ENCODE measurements at regions of chr10 and their contacts with region 1.

Region 1: GRCh38 chr10:17257466-17258321 is 29.7 kb downstream of the VIM start:
- DNase-seq: peak; percentile 18
- ATAC-seq: peak; percentile 81 to 90
- H3K4me3 ChIP-seq: peak overlapping the region in 1 of 4 donors; percentile 2
- H3K27ac ChIP-seq: no peak overlapping the region
- H3K4me1 ChIP-seq: peaks cover 0 to 4% of the 10 kb centered on the region in 2 donors
- H3K27me3 ChIP-seq: no peaks in the 10 kb centered on the region
- CTCF ChIP-seq: peak; percentile 63 to 85 (median 72)
- POLR2A ChIP-seq: no peak

Region 2: GRCh38 chr10:15901889-15902288 is 1355.8 kb before region 1 on chr10:
- in situ Hi-C with region 1: loop called in 1 of 4 experiments (anchors 25 kb)
- intact Hi-C with region 1: no loop called
- DNase-seq: no peak
- ATAC-seq: no peak
- H3K4me3 ChIP-seq: no peak overlapping the region
- H3K27ac ChIP-seq: no peak overlapping the region
- H3K4me1 ChIP-seq: no peaks in the 10 kb centered on the region
- H3K27me3 ChIP-seq: peaks cover 0 to 3% (median 0%) of the 10 kb centered on the region in 3 donors
- CTCF ChIP-seq: no peak
- POLR2A ChIP-seq: no peak

Region 3: GRCh38 chr10:16828114-16828568 is 429.6 kb before region 1 on chr10:
- in situ Hi-C with region 1: loop called in 1 of 4 experiments (anchors 5 kb)
- intact Hi-C with region 1: loop called (anchors 1 kb)
- DNase-seq: peak in 1 of 2 donors; percentile 20
- ATAC-seq: peak; percentile 74 to 78
- H3K4me3 ChIP-seq: no peak overlapping the region
- H3K27ac ChIP-seq: peak overlapping the region in 1 of 4 donors; percentile 5
- H3K4me1 ChIP-seq: peaks cover 0 to 6% of the 10 kb centered on the region in 2 donors
- H3K27me3 ChIP-seq: no peaks in the 10 kb centered on the region
- CTCF ChIP-seq: peak; percentile 21 to 65 (median 61)
- POLR2A ChIP-seq: no peak

Region 4: DNA sequence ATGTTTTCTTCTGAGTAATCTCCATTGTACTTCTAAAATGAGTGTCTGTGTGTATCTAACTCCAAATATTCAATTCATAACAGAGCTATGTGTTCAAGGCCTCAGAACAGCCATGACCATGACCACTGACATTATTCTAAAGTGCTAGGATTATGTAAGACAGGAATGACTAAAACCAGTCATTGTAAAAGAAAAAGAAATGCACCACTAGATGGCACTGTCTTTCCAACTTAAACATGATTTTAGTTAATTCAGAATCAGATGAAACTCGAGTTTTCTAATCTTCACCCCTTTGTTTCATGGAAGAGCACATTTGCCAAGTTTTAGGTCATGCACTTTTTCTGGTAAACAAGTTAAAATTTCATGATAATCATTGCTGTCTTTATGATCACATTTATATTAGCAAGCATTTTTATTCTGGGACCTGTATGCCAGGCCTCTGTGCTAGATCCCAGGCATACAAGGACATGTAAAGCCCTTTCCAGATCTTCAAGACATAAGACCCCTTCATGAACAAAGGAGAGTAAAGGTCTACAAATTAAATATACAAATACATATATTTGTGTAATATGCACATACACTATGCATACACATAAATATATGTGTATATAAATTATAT is 414.3 kb before region 1 on chr10:
- in situ Hi-C with region 1: loop called in 3 of 4 experiments (anchors 5 kb)
- intact Hi-C with region 1: loop called (anchors 1 kb)
- DNase-seq: no peak
- ATAC-seq: peak in 1 of 2 donors; percentile 68
- H3K4me3 ChIP-seq: no peak overlapping the region
- H3K27ac ChIP-seq: no peak overlapping the region
- H3K4me1 ChIP-seq: no peaks in the 10 kb centered on the region
- H3K27me3 ChIP-seq: no peaks in the 10 kb centered on the region
- CTCF ChIP-seq: peak in 4 of 5 experiments; percentile 41 to 69 (median 57)
- POLR2A ChIP-seq: no peak

Region 5: DNA sequence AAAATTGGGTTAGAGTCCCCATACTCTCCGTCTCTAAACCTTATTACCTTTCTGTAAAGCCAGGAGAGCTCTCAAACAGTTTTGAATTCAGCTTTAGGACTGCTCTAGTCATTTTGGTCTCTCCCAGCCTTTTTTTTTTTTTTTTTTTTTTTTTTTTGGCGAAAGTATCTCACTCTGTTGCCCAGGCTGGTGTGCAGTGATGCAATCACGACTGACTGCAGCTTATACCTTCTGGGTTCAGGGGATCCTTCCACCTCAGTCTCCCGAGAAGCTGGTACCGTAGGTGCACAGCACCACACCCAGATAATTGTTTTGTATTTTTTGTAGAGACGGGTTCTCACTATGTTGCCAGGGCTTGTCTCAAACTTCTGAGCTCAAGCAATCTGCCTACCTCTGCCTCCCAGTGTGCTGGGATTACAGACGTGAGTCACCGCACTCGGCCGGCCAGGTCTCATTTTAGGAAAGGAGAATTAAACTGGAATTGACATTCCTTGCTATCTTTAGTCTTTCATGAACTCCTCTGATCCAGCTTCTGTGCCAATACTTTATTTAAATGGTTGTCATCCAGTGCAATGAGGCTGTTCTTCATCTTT is 409.0 kb before region 1 on chr10:
- in situ Hi-C with region 1: loop called in 3 of 4 experiments (anchors 5 kb)
- intact Hi-C with region 1: loop called (anchors 1 kb)
- DNase-seq: no peak
- ATAC-seq: no peak
- H3K4me3 ChIP-seq: no peak overlapping the region
- H3K27ac ChIP-seq: no peak overlapping the region
- H3K4me1 ChIP-seq: no peaks in the 10 kb centered on the region
- H3K27me3 ChIP-seq: no peaks in the 10 kb centered on the region
- CTCF ChIP-seq: no peak
- POLR2A ChIP-seq: no peak

Region 6: GRCh38 chr10:16891375-16892313 is 366.1 kb before region 1 on chr10:
- in situ Hi-C with region 1: no loop called
- intact Hi-C with region 1: loop called (anchors 2 kb)
- DNase-seq: peak; percentile 8 to 43
- ATAC-seq: peak; percentile 65 to 71
- H3K4me3 ChIP-seq: no peak overlapping the region
- H3K27ac ChIP-seq: no peak overlapping the region
- H3K4me1 ChIP-seq: no peaks in the 10 kb centered on the region
- H3K27me3 ChIP-seq: no peaks in the 10 kb centered on the region
- CTCF ChIP-seq: peak; percentile 23 to 54 (median 29)
- POLR2A ChIP-seq: no peak